Dendritic cell treated with granulocyte-macrophage colony-stimulating factor and Interleukin-4, amounts not matched to agents 40 ng/mL and 50 ng/mL, for 4 days (primary cell): ENCODE measurements at regions of chr3 and their contacts with region 1.

Region 1: GRCh38 chr3:20080956-20081554 is 40.8 kb downstream of the KAT2B start:
- H3K4me3 Mint-ChIP-seq: no peak overlapping the region
- H3K27ac Mint-ChIP-seq: peak overlapping the region; percentile 22
- H3K4me1 Mint-ChIP-seq: peaks cover 12% of the 10 kb centered on the region
- H3K27me3 Mint-ChIP-seq: no peaks in the 10 kb centered on the region

Region 2: GRCh38 chr3:20013396-20013795 is 67.7 kb before region 1 on chr3:
- intact Hi-C with region 1: no loop called
- H3K4me3 Mint-ChIP-seq: no peak overlapping the region
- H3K27ac Mint-ChIP-seq: no peak overlapping the region
- H3K4me1 Mint-ChIP-seq: no peaks in the 10 kb centered on the region
- H3K27me3 Mint-ChIP-seq: no peaks in the 10 kb centered on the region

Region 3: DNA sequence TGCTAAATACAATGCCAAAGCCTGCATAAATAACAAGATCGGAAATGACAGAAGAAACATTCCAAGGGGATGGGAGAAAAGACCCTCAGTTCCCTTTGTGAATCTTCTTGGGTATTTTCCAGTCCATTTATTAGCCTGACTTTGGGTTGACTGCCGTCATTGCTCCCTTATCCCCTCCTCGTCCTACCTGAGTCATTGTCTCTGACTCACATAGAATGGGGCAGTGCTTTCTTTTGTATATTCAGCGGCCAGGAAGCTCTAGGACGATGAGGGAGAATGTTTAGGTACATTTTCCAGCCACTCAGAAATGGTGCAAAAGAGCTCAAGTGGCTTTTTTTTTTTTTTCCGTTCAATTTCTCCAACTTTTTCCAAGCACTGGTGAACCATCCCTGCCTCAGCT is 30.8 kb after region 1 on chr3:
- intact Hi-C with region 1: loop called (anchors 5 kb)
- H3K4me3 Mint-ChIP-seq: no peak overlapping the region
- H3K27ac Mint-ChIP-seq: no peak overlapping the region
- H3K4me1 Mint-ChIP-seq: no peaks in the 10 kb centered on the region
- H3K27me3 Mint-ChIP-seq: no peaks in the 10 kb centered on the region

Region 4: GRCh38 chr3:20173844-20174410 is 92.9 kb after region 1 on chr3:
- intact Hi-C with region 1: no loop called
- H3K4me3 Mint-ChIP-seq: no peak overlapping the region
- H3K27ac Mint-ChIP-seq: no peak overlapping the region
- H3K4me1 Mint-ChIP-seq: no peaks in the 10 kb centered on the region
- H3K27me3 Mint-ChIP-seq: no peaks in the 10 kb centered on the region